Left colon (tissue), 2 donors: ENCODE measurements at regions of chr9 and their contacts with region 1.

Region 1: DNA sequence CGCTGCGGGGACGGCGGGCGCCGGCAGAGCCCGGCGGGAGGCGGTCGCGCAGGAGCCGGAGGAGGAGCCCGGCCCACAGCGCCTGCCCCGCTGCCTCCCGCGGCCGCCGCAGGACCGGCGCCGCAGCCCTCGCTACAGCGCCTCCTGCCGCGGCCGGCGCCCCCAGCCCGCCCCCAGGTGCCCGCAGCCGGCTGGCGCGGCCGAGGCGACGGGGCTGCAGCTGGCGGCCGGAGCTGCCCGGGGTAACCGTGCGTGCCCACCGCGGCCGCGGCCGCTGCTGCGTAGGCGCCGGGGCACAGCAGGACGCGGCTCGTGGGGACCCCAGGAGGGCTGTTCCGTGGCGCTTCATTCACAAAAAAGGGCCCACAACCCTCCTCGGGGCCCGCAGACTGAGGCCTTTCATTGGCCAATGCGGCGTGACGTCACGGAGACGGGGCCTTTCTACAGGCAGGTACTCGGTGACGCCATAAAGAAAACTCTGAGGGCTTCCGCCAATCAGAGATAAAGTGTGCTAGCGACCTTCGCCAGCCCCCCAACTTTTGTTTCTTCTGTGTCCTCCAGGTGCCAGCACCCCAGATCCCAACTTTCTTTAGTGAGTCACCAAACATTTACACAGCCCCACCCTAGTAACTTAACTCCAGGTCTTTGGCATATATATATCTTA is at the start of gene CDC14B:
- DNase-seq: peak; percentile 96 to 97
- ATAC-seq: peak; percentile 90
- total RNA-seq, gene CDC14B: 16.5 to 20.8 TPM

Region 2: GRCh38 chr9:96566498-96567207 is 53.0 kb before region 1 on chr9:
- intact Hi-C with region 1: loop called in 1 of 2 experiments (anchors 10 kb)
- DNase-seq: peak; percentile 87 to 92
- ATAC-seq: peak; percentile 93

Region 3: DNA sequence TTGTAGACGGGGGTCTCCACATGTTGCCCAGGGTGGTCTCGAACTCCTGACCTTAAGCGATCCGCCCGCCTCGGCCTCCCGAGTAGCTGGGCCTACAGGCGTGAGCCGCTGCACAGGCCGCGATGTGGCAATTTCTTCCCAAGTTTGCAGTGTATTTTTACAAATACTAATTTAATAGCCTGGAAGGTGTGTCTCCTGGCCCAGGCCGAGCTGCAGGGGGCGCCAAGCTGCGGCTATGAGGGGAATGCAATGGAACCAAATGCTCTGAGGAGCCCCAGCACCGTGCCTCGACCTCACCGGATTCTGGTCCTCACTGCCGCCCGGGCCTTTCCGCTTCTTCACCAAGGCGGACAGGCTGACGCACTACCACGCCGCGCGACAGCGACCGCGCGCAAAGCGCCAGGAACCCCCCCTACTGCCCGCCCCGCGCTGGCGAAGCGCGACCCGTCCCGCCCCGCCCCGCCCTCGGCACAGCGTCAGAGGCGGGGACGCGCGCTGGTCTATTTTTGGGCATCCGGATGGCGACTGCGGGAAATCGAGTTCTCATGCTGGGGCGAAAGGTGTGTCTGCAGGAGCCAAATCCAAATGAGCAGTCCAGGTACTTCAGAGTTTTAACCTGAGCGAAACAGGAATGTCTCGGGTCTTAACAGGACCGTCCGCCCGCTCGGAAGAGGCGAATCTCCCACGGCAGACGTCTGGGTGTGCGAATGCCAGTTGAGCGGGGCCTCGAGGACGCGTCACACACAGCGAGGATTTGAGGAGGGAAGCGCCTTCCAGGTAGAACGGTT is 67.1 kb after region 1 on chr9:
- intact Hi-C with region 1: loop called in 1 of 2 experiments (anchors 10 kb)
- DNase-seq: peak; percentile 66 to 75
- ATAC-seq: peak; percentile 96